Mammary epithelial cell (primary cell): ENCODE measurements at regions of chr22 and their contacts with region 1.

Region 1: DNA sequence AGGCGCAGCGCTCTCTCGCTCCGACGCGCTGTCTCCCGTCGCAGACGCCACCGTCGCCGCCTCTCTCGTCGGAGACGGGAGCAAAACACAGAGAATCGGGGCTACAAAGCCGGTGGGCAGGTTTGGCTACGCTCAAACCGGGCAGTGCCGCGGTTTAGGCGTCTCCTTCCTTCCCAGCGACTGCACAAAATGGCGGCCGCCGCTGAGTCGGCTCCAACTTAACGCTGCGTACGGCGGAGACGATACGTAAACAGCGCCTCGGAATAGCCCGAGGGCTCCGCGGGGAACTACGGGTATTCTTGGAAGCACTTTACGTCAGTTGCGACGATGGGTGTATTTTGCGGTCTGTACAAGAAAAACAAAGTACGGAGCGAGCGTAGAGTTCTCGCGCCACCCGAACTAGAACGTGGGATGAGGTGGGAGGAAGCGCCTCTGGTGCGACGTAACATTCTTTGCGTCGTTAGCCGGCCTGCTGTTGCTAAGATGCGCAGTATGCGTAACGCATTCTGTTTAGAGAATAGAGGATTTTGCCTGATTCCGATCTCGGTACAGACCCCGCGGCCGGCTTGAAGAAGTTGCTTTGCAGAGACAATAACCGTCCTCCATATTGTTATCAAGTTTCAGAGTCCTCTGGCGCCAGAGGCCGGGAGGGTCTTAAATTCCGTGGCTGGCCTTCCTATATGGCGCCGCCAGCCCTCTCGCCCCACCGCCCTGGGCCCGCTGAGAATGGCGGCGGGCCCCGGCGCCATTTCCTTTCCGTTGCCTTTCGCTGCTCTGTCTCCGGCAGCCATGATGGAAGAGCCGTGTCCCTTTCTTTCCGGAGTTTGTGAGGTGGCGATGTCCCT is at the start of gene DDX17:
- DNase-seq: peak; percentile 92
- H3K4me3 ChIP-seq: peak within 1 kb of the TSS; percentile 83 to 96 (median 90)
- H3K27ac ChIP-seq: peak within 1 kb of the TSS; percentile 98
- H3K4me1 ChIP-seq: peaks cover 12% of the 10 kb centered on the region
- H3K27me3 ChIP-seq: no peaks in the 10 kb centered on the region
- CTCF ChIP-seq: no peak
- total RNA-seq, gene DDX17: 235 to 405 TPM

Region 2: GRCh38 chr22:38705235-38706100 is 199.1 kb after region 1 on chr22 and contains the start of gene GTPBP1:
- CTCF ChIA-PET with region 1: no interaction called
- dilution Hi-C with region 1: no loop called
- in situ Hi-C with region 1: no loop called
- intact Hi-C with region 1: loop called (anchors 5 kb)
- DNase-seq: peak; percentile 100
- H3K4me3 ChIP-seq: peak within 1 kb of the TSS; percentile 73 to 93 (median 84)
- H3K27ac ChIP-seq: peak within 1 kb of the TSS; percentile 86
- H3K4me1 ChIP-seq: peaks cover 32% of the 10 kb centered on the region
- H3K27me3 ChIP-seq: no peaks in the 10 kb centered on the region
- CTCF ChIP-seq: peak in 1 of 2 donors; percentile 14
- total RNA-seq, gene GTPBP1: 23.0 to 47.4 TPM